Heart right ventricle (tissue), 16 donors: ENCODE measurements at regions of chr19 and their contacts with region 1.

Region 1: GRCh38 chr19:44757735-44758505 is 9.4 kb downstream of the BCL3 start:
- DNase-seq: peak; percentile 84 to 87
- ATAC-seq: peak; percentile 30 to 72 (median 61)
- H3K4me3 ChIP-seq: peak overlapping the region; percentile 36 to 64 (median 56)
- H3K27ac ChIP-seq: peak overlapping the region; percentile 55 to 100 (median 94)
- H3K4me1 ChIP-seq: peaks cover 16 to 70% (median 55%) of the 10 kb centered on the region in 9 donors
- H3K27me3 ChIP-seq: no peaks in the 10 kb centered on the region
- CTCF ChIP-seq: peak in 5 of 9 donors; percentile 26 to 60 (median 58)

Region 2: DNA sequence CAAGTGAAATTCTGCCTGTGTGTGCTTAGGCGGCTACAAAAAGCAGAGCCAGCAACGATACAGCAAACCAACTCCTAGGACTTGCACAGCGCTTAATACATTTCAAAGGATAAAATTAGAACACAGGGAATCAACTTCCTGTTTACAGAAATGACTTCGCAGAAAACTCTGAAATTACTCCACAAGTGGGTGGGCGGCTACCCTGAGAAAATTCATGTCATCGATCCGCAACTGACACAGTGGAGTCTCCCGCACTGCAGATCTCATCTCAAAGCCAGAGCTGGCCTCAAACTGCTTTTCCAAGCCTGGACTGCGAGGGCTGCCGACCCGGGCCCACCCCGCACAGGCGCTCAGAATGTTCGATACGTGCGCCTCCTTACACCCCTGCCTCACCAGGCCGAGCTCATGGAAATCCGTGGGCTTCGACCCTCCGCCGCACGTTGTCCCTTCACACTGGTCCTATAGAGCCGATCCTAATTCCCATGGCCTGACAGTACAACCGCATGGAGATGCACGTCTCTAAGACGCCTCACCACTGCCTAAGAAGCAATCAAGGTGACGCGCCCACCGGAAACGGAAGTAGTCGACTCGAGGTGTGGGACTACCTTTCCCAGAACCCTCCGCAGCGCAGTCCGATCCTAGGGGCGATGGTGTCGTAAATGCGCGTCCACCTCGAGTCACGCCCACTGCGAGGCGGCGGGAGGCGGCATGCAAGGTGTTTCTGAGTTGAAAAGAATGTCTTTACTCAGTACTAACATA is 309.8 kb before region 1 on chr19 and contains the start of gene ZNF229:
- intact Hi-C with region 1: no loop called
- DNase-seq: peak; percentile 86 to 91
- ATAC-seq: peak; percentile 97 to 99 (median 98)
- H3K4me3 ChIP-seq: peak within 1 kb of the TSS; percentile 62 to 85 (median 68)
- H3K27ac ChIP-seq: peak within 1 kb of the TSS in 9 of 10 donors; percentile 27 to 71 (median 37)
- H3K4me1 ChIP-seq: peaks cover 0 to 17% (median 12%) of the 10 kb centered on the region in 9 donors
- H3K27me3 ChIP-seq: no peaks in the 10 kb centered on the region
- CTCF ChIP-seq: no peak
- total RNA-seq, gene ZNF229: 5.4 to 11.4 (median 6.9) TPM

Region 3: GRCh38 chr19:44696939-44697669 is 60.8 kb before region 1 on chr19:
- intact Hi-C with region 1: no loop called
- DNase-seq: no peak
- ATAC-seq: no peak
- H3K4me3 ChIP-seq: no peak overlapping the region
- H3K27ac ChIP-seq: no peak overlapping the region
- H3K4me1 ChIP-seq: peaks cover 0 to 28% (median 16%) of the 10 kb centered on the region in 9 donors
- H3K27me3 ChIP-seq: peaks cover 0 to 4% (median 0%) of the 10 kb centered on the region in 7 donors
- CTCF ChIP-seq: no peak

Region 4: GRCh38 chr19:44723952-44724319 is 34.0 kb before region 1 on chr19:
- intact Hi-C with region 1: loop called in 4 of 10 experiments (anchors 5 kb)
- DNase-seq: peak; percentile 83 to 84
- ATAC-seq: peak; percentile 89 to 94 (median 90)
- H3K4me3 ChIP-seq: no peak overlapping the region
- H3K27ac ChIP-seq: peak overlapping the region in 9 of 10 donors; percentile 0 to 60 (median 28)
- H3K4me1 ChIP-seq: peaks cover 12 to 65% (median 48%) of the 10 kb centered on the region in 9 donors
- H3K27me3 ChIP-seq: no peaks in the 10 kb centered on the region
- CTCF ChIP-seq: peak; percentile 94 to 100 (median 99)

Region 5: DNA sequence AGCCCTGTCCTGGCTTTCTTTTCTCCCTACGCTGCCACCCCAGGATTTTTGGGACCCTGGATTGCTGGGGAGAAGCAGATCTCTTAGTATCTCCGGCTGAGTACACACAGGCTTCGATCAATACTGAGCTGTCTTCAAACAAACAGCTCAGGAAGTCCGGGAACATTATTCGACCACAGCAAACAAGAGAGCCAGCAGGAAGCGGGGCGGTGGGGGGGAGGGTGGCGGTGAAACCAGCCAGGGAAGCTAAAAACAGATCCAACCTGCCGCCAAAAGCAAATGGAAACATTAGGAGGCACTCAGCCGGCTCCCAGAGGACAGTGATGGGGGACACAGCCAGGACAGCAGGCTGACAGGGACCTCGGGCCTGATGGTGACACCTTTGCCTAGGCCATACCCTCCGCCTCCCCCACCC is 38.8 kb after region 1 on chr19:
- intact Hi-C with region 1: no loop called
- DNase-seq: peak; percentile 62 to 82
- ATAC-seq: peak; percentile 72 to 92 (median 80)
- H3K4me3 ChIP-seq: peak overlapping the region in 1 of 10 donors; percentile 28
- H3K27ac ChIP-seq: peak overlapping the region; percentile 60 to 93 (median 84)
- H3K4me1 ChIP-seq: peaks cover 0 to 22% (median 17%) of the 10 kb centered on the region in 9 donors
- H3K27me3 ChIP-seq: no peaks in the 10 kb centered on the region
- CTCF ChIP-seq: no peak